AG04450 (cell line): ENCODE measurements at regions of chr5 and their contacts with region 1.

Region 1: GRCh38 chr5:176660860-176661641 is 13.8 kb downstream of the TSPAN17 start:
- DNase-seq: peak; percentile 26
- H3K4me3 ChIP-seq: no peak overlapping the region
- H3K27ac ChIP-seq: no peak overlapping the region
- H3K27me3 ChIP-seq: peaks cover 21% of the 10 kb centered on the region
- CTCF ChIP-seq: peak; percentile 95

Region 2: GRCh38 chr5:176436661-176437071 is 224.4 kb before region 1 on chr5:
- CTCF ChIA-PET with region 1: no interaction called
- POLR2A ChIA-PET with region 1: no interaction called
- DNase-seq: no peak
- H3K4me3 ChIP-seq: no peak overlapping the region
- H3K27ac ChIP-seq: no peak overlapping the region
- H3K27me3 ChIP-seq: no peaks in the 10 kb centered on the region
- CTCF ChIP-seq: no peak

Region 3: GRCh38 chr5:176620333-176620981 is 40.6 kb before region 1 on chr5:
- CTCF ChIA-PET with region 1: interaction called, 14 read pairs
- POLR2A ChIA-PET with region 1: no interaction called
- DNase-seq: no peak
- H3K4me3 ChIP-seq: peak overlapping the region; percentile 25; the same call in 1 of the 2 replicates
- H3K27ac ChIP-seq: no peak overlapping the region
- H3K27me3 ChIP-seq: peaks cover 40% of the 10 kb centered on the region
- CTCF ChIP-seq: no peak

Region 4: DNA sequence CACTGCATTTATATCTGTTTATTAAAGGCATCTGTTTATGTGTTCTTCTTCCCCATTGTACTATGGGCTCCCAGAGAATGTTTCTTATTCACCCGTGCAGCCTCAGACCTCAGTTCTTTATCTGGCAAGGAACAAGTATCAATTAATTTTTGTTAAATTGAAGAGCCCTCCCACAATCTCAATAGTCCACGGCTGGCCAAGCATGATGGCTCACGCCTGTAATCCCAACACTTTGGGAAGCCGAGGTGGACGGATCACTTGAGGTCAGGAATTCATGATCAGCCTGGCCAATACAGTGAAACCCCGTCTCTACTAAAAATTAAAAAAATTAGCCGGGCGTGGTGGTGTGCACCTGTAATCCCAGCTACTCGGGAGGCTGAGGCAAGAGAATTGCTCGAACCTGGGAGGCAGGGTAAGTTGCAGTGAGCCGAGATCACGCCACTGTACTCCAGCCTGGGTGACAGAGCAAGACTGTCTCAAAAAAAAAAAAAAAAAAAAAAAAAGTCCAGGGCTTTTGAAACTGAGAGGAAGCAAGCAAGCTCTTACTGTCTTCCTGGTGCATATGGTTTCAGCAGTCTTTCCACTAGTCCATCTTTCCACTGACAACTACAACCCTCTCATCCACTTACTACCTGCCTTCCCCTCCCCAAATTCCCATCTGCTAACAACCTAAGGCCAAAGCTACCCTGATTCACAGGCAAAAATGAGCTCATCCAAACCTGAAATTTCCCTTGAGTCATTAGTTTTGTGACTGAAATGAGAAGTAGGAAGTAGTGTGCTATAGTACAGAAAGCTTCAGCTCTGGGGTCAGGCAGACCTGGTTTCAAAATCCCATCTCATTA is 240.4 kb after region 1 on chr5:
- CTCF ChIA-PET with region 1: interaction called, 16 read pairs
- POLR2A ChIA-PET with region 1: no interaction called
- DNase-seq: no peak
- H3K4me3 ChIP-seq: no peak overlapping the region
- H3K27ac ChIP-seq: no peak overlapping the region
- H3K27me3 ChIP-seq: peaks cover 5% of the 10 kb centered on the region
- CTCF ChIP-seq: no peak

Region 5: GRCh38 chr5:176921714-176922113 is 260.7 kb after region 1 on chr5:
- CTCF ChIA-PET with region 1: interaction called, 21 read pairs
- POLR2A ChIA-PET with region 1: no interaction called
- DNase-seq: no peak
- H3K4me3 ChIP-seq: no peak overlapping the region
- H3K27ac ChIP-seq: no peak overlapping the region
- H3K27me3 ChIP-seq: no peaks in the 10 kb centered on the region
- CTCF ChIP-seq: no peak

Region 6: GRCh38 chr5:176959051-176959450 is 298.0 kb after region 1 on chr5:
- CTCF ChIA-PET with region 1: interaction called, 41 read pairs
- POLR2A ChIA-PET with region 1: no interaction called
- DNase-seq: no peak
- H3K4me3 ChIP-seq: no peak overlapping the region
- H3K27ac ChIP-seq: no peak overlapping the region
- H3K27me3 ChIP-seq: no peaks in the 10 kb centered on the region
- CTCF ChIP-seq: peak; percentile 49

Region 7: GRCh38 chr5:177071666-177072385 is 410.8 kb after region 1 on chr5:
- CTCF ChIA-PET with region 1: interaction called, 26 read pairs
- POLR2A ChIA-PET with region 1: no interaction called
- DNase-seq: peak; percentile 69
- H3K4me3 ChIP-seq: no peak overlapping the region
- H3K27ac ChIP-seq: no peak overlapping the region
- H3K27me3 ChIP-seq: no peaks in the 10 kb centered on the region
- CTCF ChIP-seq: peak; percentile 95